ENCODE measurements at regions of chr14 and their contacts with region 1.

Region 1: DNA sequence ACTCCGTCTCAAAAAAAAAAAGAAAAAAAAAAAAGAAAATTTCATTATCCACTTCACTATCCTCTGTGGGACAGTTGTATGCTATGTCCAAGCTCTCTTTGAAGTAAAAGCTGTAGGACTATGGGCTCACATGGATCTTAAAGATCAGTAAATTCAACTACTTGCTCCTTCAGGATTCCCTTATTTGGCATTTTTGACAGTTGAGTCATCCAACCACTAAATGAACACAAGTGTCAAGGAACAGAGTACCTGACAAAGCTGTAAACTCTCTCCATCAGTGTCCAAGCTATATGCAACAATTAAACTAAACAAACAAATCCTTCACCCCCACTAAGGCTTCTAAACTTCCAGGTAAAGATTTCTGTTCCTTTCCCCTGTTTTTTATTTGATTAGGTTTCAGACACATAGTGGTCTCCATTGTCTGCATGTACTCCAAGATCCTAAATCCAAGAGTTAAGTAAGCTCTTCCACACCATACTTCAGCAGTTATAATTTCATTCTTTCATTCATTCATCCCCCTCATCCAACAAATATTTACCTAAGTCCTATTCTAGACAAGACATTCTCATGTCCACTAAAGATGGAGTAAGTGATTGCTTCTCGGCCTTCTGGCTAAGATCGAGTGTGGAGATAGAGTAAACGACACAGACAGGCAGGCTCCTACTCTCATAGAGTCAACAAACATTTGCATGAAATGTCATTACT is 176.9 kb downstream of the CEP128 start:
- DNase-seq: no peak
- H3K4me3 ChIP-seq: no peak overlapping the region
- H3K27ac ChIP-seq: no peak overlapping the region
- H3K4me1 ChIP-seq: no peaks in the 10 kb centered on the region
- H3K27me3 ChIP-seq: no peaks in the 10 kb centered on the region
- CTCF ChIP-seq: no peak

Region 2: GRCh38 chr14:80621701-80622100 is 142.9 kb before region 1 on chr14:
- CTCF ChIA-PET with region 1: no interaction called
- dilution Hi-C with region 1: no loop called
- in situ Hi-C with region 1: no loop called
- intact Hi-C with region 1: no loop called
- DNase-seq: peak; percentile 68
- H3K4me3 ChIP-seq: no peak overlapping the region
- H3K27ac ChIP-seq: no peak overlapping the region
- H3K4me1 ChIP-seq: peaks cover 6% of the 10 kb centered on the region
- H3K27me3 ChIP-seq: no peaks in the 10 kb centered on the region
- CTCF ChIP-seq: no peak

Region 3: DNA sequence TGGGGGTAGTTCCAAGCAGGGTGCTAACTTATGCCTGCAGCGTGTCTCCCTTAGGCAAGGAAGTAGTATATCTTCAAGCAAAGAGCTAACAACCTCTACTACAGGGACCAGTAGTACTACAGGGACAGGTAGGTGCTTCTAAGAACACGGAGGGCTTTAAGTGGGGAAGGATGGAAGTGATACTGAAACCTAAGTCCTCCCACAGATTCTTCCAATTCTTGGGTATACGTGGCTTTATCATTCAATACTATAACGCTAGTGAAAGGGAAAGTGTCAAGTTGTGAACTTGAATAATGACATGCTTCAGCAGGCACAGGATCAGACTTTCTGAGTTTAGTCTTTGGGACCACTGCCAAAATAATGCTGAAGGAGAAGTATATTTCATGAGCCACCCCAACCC is 64.8 kb before region 1 on chr14:
- CTCF ChIA-PET with region 1: no interaction called
- dilution Hi-C with region 1: loop called (anchors 5 kb)
- in situ Hi-C with region 1: no loop called
- intact Hi-C with region 1: no loop called
- DNase-seq: no peak
- H3K4me3 ChIP-seq: no peak overlapping the region
- H3K27ac ChIP-seq: no peak overlapping the region
- H3K4me1 ChIP-seq: no peaks in the 10 kb centered on the region
- H3K27me3 ChIP-seq: no peaks in the 10 kb centered on the region
- CTCF ChIP-seq: no peak

Region 4: DNA sequence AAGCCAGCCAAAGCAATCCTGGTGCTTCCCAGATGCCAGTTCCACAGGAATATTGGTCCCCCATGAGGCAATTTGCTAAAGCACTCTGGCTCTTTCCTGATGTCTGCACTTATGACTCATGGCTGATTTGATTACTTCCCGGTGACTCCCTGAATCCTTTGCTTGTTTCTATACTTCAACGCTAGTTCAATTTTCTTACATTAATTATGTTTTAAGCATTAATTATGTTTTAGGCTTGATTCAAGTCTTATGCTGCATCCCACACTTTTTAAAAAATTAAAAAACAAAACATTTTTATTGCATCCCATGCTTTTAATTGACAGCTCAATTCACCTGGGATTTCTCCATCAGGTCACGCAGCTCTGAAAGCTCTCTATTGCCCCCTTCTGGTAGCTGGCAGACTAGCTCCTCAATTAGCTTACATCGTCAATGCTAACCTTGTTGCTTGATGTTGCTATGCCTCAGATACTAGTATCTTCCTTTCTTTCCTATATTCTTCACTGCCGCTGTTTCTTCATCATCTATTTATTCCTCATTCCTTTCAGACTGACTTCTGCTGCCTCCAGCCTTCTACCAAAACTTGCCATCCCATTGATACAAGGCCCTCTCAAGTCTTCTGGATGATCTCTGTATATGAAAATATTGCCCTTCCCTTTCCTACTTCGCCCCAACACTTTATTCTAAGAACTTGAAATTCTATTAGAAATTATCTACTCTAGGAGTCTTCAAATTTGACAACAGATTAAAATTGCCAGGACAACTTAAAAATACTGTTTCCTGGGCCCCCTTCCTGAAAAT is 222.8 kb after region 1 on chr14:
- CTCF ChIA-PET with region 1: no interaction called
- dilution Hi-C with region 1: no loop called
- in situ Hi-C with region 1: no loop called
- intact Hi-C with region 1: no loop called
- DNase-seq: peak; percentile 68
- H3K4me3 ChIP-seq: no peak overlapping the region
- H3K27ac ChIP-seq: no peak overlapping the region
- H3K4me1 ChIP-seq: no peaks in the 10 kb centered on the region
- H3K27me3 ChIP-seq: no peaks in the 10 kb centered on the region
- CTCF ChIP-seq: peak; percentile 92 to 98